Activated naive CD4-positive, alpha-beta T cell treated with anti-CD3 and anti-CD28 coated beads for 36 hours (primary cell): ENCODE measurements at regions of chr1 and their contacts with region 1.

Region 1: DNA sequence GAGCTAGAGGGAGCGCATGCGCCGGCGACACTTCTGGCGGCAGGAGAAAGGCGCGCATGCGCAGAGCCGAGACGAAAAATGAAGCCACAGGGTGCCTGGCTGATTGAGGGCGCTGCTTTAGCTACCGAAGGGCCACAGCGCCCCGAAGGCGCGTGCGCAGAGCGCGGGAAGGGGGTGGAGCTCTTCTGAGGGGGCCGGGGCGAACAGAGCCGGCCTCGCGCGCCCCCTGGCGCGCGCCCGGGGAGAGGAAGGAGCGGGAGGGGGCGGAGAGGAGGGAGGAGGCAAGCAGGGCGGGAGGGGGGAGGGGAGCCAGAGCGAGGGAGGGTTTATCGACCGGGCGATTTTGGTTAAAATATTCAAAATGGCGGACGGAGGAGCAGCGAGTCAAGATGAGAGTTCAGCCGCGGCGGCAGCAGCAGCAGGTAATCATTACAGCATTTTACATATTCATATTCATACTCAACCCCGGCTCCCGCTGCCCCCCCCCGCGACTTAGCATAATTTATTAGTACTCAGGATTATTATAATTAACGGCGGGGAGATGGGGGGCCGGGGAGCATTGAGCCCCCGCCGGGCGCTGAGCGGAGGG is at the start of gene POU2F1:
- DNase-seq: peak; percentile 99
- H3K4me3 Mint-ChIP-seq: peak within 1 kb of the TSS; percentile 99
- H3K27ac Mint-ChIP-seq: peak within 1 kb of the TSS; percentile 99
- H3K4me1 Mint-ChIP-seq: peaks cover 37% of the 10 kb centered on the region
- H3K27me3 Mint-ChIP-seq: peaks cover 2% of the 10 kb centered on the region
- total RNA-seq, gene POU2F1: 17.6 to 19.4 TPM

Region 2: DNA sequence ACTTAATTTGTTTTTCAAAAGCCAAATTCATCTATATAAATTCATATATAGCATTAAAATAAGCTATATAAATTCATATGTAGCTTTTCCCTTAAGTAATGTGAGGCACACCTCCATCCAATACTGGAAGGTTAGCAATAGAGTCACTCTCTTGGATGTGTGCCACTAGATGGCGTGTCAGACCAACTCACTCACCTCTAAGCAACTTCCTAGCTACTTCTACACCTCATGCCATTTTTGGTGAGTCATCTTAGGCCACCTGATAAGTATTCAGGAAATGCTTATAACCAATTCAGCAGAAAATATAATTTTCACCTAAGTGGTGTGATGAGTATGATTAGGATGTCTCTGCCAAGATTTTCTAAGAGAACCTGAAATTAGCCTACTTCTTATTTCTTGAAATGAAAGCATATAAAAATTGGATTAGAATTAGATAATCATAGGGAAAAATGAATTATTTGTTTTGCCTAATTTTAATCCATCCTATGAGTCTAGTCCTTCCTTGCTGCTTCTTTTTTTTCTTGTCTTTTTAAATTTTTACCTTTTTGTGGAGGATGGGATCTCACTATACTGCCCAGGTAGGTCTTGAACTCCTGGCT is 310.1 kb before region 1 on chr1:
- CTCF ChIA-PET with region 1: interaction called, 3 read pairs
- intact Hi-C with region 1: loop called (anchors 2 kb)
- DNase-seq: peak; percentile 90
- H3K4me3 Mint-ChIP-seq: no peak overlapping the region
- H3K27ac Mint-ChIP-seq: no peak overlapping the region
- H3K4me1 Mint-ChIP-seq: peaks cover 5% of the 10 kb centered on the region
- H3K27me3 Mint-ChIP-seq: no peaks in the 10 kb centered on the region

Region 3: DNA sequence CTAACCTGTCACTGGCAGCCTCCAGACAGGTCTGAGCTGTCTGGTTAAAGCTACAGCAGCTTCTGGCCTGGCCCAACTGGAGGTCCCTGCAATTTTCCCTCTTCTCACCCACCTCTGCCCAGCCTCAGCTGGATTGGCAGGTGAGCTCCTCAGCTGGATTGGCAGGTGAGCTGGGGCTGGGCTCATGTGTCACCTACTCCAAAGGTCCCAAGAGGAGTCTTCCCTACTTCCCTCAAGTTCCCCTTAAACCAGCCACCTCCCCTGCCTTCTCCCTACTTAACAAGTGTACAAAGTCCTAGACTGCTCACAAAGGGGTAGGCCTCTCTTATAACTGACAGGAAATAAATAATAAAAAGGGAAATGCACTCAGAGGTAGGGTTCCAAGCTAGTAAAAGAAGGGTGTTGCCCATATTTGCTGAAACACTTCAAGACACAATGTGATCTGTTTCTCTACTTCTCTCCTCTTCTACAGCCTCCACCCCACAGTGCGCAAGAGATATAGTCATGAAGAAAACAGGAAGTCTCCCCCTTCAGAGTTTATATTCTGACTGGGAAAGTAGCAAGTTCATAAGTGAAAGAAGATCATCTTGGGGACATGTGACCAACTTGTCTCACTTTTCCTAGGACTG is 130.2 kb before region 1 on chr1 and contains the start of gene GPA33:
- CTCF ChIA-PET with region 1: interaction called, 3 read pairs
- intact Hi-C with region 1: loop called (anchors 1 kb)
- DNase-seq: peak; percentile 61
- H3K4me3 Mint-ChIP-seq: peak within 1 kb of the TSS; percentile 21
- H3K27ac Mint-ChIP-seq: peak within 1 kb of the TSS; percentile 88
- H3K4me1 Mint-ChIP-seq: peaks cover 50% of the 10 kb centered on the region
- H3K27me3 Mint-ChIP-seq: no peaks in the 10 kb centered on the region
- total RNA-seq, gene GPA33: 1.2 to 1.4 TPM

Region 4: DNA sequence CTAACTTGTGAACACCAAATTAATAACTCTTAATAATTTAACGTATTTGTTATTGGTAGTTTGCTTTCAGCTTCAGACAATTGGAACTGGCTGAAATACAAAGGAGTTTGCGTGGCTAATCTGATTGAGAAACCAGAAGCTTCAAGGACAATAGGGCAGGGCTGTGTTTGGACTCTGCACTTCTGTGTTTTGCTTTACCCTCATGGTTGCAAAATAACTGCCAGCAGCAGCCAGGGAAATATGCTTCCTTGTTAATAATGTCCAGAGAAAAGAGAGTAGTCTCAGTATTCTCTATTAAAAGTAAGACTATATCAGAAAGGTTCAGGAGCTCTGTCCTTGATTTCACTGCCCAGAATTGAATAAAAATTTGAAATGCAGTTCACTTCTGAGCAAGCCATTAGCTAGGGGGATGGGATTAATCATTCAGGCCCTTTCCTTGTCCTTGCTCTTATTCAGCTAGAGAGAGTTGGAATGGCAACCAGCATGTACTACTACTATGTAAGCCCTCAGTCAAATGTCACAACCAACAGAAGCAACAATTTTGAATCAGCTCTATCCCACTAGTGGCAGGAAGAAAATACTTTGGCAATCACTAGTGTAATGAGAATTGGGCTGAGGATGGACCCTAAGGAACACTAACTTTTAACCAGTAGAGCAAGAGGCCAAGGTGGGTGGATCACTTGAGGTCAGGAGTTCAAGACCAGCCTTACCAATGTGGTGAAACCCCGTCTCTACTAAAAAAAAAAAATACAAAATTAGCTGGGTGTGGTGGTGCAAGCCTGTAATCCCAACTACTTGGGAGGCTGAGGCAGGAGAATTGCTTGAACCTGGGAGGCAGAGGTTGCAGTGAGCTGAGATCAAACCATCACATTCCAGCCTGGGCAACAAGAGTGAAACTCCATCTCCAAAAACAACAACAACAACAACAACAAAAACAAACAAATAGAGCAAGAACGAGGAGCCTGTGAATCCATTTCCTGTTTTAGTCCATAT is 76.9 kb after region 1 on chr1:
- CTCF ChIA-PET with region 1: no interaction called
- intact Hi-C with region 1: no loop called
- DNase-seq: no peak
- H3K4me3 Mint-ChIP-seq: no peak overlapping the region
- H3K27ac Mint-ChIP-seq: no peak overlapping the region
- H3K4me1 Mint-ChIP-seq: peaks cover 15% of the 10 kb centered on the region
- H3K27me3 Mint-ChIP-seq: no peaks in the 10 kb centered on the region

Region 5: GRCh38 chr1:167330601-167331293 is 110.1 kb after region 1 on chr1:
- CTCF ChIA-PET with region 1: no interaction called
- intact Hi-C with region 1: loop called (anchors 5 kb)
- DNase-seq: no peak
- H3K4me3 Mint-ChIP-seq: no peak overlapping the region
- H3K27ac Mint-ChIP-seq: no peak overlapping the region
- H3K4me1 Mint-ChIP-seq: peaks cover 35% of the 10 kb centered on the region
- H3K27me3 Mint-ChIP-seq: no peaks in the 10 kb centered on the region

Region 6: GRCh38 chr1:167517535-167518330 is 297.1 kb after region 1 on chr1:
- CTCF ChIA-PET with region 1: no interaction called
- intact Hi-C with region 1: loop called (anchors 1 kb)
- DNase-seq: peak; percentile 95
- H3K4me3 Mint-ChIP-seq: peak overlapping the region; percentile 90
- H3K27ac Mint-ChIP-seq: peak overlapping the region; percentile 96
- H3K4me1 Mint-ChIP-seq: peaks cover 25% of the 10 kb centered on the region
- H3K27me3 Mint-ChIP-seq: no peaks in the 10 kb centered on the region

Region 7: DNA sequence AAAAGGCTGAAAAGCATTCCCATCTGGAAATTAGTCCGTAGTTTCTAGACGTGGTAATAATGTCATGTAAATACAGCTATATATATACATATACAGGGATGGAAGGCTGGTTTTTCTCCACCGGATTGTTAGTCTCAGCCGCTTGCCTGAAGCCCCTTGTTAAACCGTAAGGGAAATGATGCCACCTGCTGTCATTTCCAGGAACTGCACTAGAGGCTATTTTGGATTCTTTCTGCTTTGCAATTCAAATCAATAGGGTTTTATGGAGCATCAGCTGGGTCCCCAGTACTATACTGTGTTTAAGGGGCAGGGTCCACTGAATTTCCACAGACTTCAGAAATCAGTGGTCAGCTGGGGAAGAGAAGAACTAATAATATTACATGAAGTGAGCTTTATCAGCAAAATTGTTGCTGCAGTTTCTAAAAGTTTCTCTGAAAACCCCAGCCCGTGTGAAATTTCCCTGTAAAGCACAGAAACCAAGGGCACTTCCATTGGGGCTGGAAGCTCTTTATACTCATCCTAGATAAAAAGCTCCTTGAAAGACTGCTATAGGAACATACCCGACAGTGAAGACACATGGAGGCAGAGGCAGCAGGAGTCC is 467.4 kb after region 1 on chr1:
- CTCF ChIA-PET with region 1: no interaction called
- intact Hi-C with region 1: loop called (anchors 5 kb)
- DNase-seq: peak; percentile 94
- H3K4me3 Mint-ChIP-seq: no peak overlapping the region
- H3K27ac Mint-ChIP-seq: peak overlapping the region; percentile 62
- H3K4me1 Mint-ChIP-seq: peaks cover 11% of the 10 kb centered on the region
- H3K27me3 Mint-ChIP-seq: no peaks in the 10 kb centered on the region